Cardiac septum (tissue), 1 donor: ENCODE measurements at regions of chr6 and their contacts with region 1.

Region 1: DNA sequence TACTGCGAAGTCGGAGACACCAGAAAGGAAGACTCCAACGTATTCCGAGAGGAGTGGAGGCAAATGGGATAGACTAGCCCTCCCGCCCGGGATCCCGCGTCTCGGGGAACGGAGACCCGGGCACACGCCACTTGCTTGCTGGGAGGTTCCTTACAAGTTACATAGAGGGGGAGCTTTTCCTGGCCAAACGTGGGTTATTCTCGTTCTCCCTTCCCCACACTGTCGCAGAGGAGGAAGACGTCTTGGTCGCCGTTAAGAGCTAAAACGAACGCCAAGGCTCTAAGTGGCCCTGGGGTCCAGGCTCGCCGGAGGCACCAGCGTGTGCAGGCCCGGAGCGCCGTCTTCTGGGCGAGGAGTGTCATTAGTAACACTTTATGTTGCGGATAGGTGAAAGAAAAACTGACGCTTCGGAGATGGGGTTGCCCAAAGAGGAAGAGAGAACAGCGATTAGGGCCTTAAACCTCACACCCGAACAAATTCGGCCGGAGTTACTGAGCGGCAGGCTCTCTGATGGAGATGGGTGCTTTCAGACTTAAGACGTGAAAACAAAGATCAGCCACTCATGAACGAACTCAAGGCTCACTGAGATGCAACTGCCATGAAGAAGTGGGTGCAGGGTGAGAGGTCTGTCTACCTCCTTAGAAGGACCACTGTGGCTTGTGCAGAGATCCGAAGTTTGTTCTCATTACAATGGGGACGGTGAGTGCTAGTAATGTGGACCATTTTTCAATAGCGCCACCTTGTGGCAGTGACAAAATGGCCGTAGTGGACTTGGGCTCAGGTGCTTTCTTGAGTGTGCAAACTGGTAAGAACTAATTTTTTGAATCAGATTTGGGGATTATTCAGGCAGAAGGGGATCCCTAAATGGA is 11.7 kb upstream of the ZNF311 start:
- DNase-seq: peak; percentile 80

Region 2: GRCh38 chr6:28683944-28684538 is 332.8 kb before region 1 on chr6:
- intact Hi-C with region 1: loop called (anchors 2 kb)
- DNase-seq: no peak

Region 3: DNA sequence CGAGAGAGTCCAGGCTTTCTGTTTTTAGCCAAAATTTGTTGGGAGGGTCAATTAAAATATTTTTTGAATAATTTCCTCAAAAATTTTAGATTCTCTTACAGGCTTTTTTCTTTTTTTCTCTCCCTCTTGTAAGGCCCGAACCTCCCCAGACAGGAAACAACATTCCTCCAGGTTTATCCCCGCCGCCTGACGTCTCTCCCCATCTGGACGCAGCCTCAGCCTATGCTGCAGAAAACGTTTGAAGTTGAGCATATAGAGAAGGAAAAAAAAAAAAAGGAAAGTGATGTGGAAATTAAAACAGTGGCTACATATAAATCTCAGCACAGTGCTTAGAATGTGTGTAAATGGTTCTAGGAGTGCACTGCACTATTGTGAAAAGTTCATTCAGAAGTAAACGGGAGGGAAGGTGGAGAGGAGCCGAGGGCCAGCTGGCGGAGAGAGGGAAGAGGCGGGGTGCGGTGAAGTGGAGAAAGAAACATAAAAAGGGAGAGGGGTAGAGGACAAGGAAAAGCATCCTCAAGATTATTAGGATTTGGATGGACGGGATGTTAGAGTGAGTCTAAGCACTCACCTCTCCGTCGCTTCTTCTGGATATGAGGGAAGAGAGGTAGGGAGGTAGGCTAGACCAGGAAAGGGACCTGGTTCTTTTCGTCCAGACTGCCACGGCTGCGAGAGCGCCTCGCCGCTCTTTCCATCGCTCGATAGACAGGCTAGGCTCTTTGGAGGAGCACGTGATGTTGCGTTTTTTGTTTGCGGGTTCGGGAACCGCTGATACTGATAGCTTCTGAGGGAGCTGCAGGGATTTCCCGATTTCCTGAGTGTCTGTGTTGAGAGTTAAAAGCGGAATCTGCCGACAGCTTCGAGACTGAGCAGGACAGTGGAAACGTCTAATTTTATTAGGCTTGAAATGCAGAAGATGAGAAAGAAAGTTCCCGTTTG is 191.7 kb before region 1 on chr6:
- intact Hi-C with region 1: no loop called
- DNase-seq: no peak

Region 4: GRCh38 chr6:28838634-28839442 is 178.0 kb before region 1 on chr6:
- intact Hi-C with region 1: loop called (anchors 2 kb)
- DNase-seq: peak; percentile 89